B cell (primary cell): ENCODE measurements at regions of chr17 and their contacts with region 1.

Region 1: GRCh38 chr17:28902819-28903545 is at the start of gene DHRS13:
- DNase-seq: peak; percentile 98
- ATAC-seq: peak; percentile 90
- H3K4me3 ChIP-seq: peak within 1 kb of the TSS; percentile 68 to 90 (median 76)
- H3K4me3 Mint-ChIP-seq: peak within 1 kb of the TSS; percentile 88
- H3K27ac ChIP-seq: peak within 1 kb of the TSS; percentile 61 to 77
- H3K27ac Mint-ChIP-seq: peak within 1 kb of the TSS; percentile 88
- H3K4me1 ChIP-seq: peaks cover 18 to 32% of the 10 kb centered on the region in 2 donors
- H3K4me1 Mint-ChIP-seq: peaks cover 34% of the 10 kb centered on the region
- H3K27me3 ChIP-seq: no peaks in the 10 kb centered on the region
- H3K27me3 Mint-ChIP-seq: no peaks in the 10 kb centered on the region
- CTCF ChIP-seq: peak; percentile 100
- total RNA-seq, gene DHRS13: 27.1 and 28.1 TPM in 2 replicates

Region 2: DNA sequence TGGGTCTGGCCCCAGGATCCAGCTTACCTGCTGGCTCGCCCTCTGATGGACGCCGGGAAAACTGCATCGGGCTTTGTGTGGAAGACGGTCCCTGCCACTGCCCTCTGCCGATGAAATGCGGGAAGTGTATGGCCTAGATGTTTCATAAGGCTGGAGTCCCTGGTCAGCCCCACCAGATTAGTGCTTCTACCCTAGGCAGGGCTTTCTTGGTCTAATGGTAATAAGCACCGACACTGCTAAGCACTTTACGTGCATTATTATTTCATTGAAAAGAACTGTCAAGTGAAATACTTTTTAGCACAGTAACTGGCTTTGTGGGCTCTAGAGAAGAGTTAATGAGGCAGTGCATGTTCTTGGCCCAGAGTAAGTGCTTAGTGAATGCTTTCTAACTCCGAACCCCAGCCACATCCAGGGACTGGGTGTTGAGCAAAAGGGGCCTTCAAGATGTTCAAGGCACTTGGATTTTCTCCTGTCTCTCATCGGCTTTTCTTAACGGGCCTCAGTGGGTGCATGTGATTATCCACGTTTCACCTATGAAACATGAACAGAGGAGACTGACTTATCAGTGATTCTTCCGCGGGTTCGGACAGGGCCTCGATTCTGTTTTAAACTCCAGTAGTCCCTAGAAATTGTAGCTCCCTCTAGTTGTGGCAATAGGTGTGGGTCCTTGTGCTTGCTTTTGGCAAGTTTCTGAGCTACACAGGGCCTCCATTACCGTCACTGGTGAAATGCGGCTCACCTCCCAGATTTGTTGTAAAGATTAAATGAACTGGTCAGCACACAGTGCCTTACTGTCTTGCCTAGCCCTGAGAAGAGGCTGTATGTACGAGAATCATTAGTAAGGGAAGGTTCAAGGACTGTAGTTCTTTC is 152.6 kb before region 1 on chr17:
- CTCF ChIA-PET with region 1: interaction called, 16 read pairs
- POLR2A ChIA-PET with region 1: no interaction called
- intact Hi-C with region 1: no loop called
- DNase-seq: peak; percentile 93
- ATAC-seq: peak; percentile 97
- H3K4me3 ChIP-seq: no peak overlapping the region
- H3K4me3 Mint-ChIP-seq: no peak overlapping the region
- H3K27ac ChIP-seq: peak overlapping the region in 1 of 2 donors; percentile 41
- H3K27ac Mint-ChIP-seq: peak overlapping the region; percentile 67
- H3K4me1 ChIP-seq: peaks cover 32 to 34% of the 10 kb centered on the region in 2 donors
- H3K4me1 Mint-ChIP-seq: peaks cover 42% of the 10 kb centered on the region
- H3K27me3 ChIP-seq: no peaks in the 10 kb centered on the region
- H3K27me3 Mint-ChIP-seq: no peaks in the 10 kb centered on the region
- CTCF ChIP-seq: peak; percentile 100

Region 3: DNA sequence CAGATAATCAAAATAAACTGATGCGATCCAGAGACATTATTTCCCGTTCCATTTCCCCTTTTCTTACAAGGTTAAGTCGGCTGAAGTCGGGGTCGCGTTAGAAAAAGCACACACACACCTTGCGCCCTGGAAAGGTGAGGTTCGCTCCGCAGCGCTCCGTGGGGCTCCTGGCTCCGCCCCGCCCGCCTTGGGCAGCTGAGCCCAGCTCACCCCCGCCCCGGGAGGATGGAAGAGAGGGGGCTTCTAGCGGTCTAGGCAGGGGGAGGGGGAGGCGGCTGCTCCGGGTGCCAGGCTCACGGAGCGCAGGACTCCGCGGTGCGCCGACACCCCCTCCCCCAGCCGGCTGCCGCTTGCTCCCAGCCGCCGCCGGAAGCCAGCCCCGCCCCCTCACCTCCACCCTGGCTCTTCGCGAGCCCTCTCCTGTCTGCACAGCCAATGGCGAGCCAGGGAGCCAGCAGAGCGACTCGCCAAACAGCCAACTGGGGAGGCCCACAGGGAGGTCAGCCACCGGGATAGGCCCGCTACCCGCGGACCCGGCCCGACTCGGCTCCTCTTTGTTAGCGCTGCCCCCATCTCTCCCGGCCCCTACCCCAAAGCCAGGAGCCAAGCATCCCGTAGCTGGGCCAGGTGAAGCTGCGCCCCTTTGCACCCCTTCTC is 90.8 kb before region 1 on chr17:
- CTCF ChIA-PET with region 1: interaction called, 5 read pairs
- POLR2A ChIA-PET with region 1: no interaction called
- intact Hi-C with region 1: loop called (anchors 1 kb)
- DNase-seq: peak; percentile 95
- ATAC-seq: peak; percentile 99
- H3K4me3 ChIP-seq: peak overlapping the region; percentile 48 to 92 (median 77)
- H3K4me3 Mint-ChIP-seq: peak overlapping the region; percentile 92
- H3K27ac ChIP-seq: peak overlapping the region; percentile 87
- H3K27ac Mint-ChIP-seq: peak overlapping the region; percentile 92
- H3K4me1 ChIP-seq: peaks cover 12 to 16% of the 10 kb centered on the region in 2 donors
- H3K4me1 Mint-ChIP-seq: peaks cover 34% of the 10 kb centered on the region
- H3K27me3 ChIP-seq: no peaks in the 10 kb centered on the region
- H3K27me3 Mint-ChIP-seq: no peaks in the 10 kb centered on the region
- CTCF ChIP-seq: no peak

Region 4: DNA sequence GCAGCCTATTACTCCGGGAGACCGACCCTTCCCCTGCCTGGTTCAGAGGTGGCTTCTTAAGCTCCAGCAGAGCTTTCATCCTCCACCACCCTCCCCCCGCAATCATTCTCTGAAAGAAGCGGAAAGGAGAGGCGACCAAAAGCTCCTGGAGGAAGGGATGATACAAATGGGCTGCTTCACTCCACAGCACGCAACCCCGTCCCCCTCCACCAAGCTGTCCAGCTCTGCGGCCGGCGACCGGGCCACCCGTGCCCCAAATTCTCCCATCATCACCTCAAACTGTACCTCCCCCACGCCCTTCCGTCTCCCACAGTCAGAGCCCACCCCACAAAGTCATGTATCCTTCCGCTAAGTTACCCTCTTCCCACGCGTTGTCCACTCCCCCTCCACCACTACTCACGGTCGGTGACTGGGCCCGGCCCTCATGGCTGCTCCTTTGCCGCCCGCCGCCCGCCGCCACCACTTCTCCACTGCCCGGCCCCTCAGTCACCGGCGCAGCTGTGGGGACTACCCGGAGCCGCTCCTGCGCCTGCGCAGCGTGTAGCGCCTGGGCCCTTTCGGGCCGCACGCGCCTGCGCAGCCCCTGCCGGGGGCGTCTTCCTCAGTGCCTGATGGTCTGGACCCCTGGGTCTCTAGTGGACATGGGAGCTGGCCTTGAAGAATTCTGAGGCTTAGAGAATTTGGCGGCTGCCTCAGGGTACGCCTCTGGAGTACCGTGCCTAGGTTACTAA is 60.5 kb before region 1 on chr17 and contains the start of gene FAM222B:
- CTCF ChIA-PET with region 1: interaction called, 22 read pairs
- POLR2A ChIA-PET with region 1: interaction called, 5 read pairs
- intact Hi-C with region 1: loop called (anchors 1 kb)
- DNase-seq: peak; percentile 91
- ATAC-seq: peak; percentile 98
- H3K4me3 ChIP-seq: peak within 1 kb of the TSS; percentile 67 to 92 (median 87)
- H3K4me3 Mint-ChIP-seq: peak within 1 kb of the TSS; percentile 97
- H3K27ac ChIP-seq: peak within 1 kb of the TSS; percentile 70 to 87
- H3K27ac Mint-ChIP-seq: peak within 1 kb of the TSS; percentile 96
- H3K4me1 ChIP-seq: peaks cover 10 to 15% of the 10 kb centered on the region in 2 donors
- H3K4me1 Mint-ChIP-seq: peaks cover 23% of the 10 kb centered on the region
- H3K27me3 ChIP-seq: no peaks in the 10 kb centered on the region
- H3K27me3 Mint-ChIP-seq: no peaks in the 10 kb centered on the region
- CTCF ChIP-seq: no peak
- total RNA-seq, gene FAM222B: 21.9 and 23.1 TPM in 2 replicates

Region 5: DNA sequence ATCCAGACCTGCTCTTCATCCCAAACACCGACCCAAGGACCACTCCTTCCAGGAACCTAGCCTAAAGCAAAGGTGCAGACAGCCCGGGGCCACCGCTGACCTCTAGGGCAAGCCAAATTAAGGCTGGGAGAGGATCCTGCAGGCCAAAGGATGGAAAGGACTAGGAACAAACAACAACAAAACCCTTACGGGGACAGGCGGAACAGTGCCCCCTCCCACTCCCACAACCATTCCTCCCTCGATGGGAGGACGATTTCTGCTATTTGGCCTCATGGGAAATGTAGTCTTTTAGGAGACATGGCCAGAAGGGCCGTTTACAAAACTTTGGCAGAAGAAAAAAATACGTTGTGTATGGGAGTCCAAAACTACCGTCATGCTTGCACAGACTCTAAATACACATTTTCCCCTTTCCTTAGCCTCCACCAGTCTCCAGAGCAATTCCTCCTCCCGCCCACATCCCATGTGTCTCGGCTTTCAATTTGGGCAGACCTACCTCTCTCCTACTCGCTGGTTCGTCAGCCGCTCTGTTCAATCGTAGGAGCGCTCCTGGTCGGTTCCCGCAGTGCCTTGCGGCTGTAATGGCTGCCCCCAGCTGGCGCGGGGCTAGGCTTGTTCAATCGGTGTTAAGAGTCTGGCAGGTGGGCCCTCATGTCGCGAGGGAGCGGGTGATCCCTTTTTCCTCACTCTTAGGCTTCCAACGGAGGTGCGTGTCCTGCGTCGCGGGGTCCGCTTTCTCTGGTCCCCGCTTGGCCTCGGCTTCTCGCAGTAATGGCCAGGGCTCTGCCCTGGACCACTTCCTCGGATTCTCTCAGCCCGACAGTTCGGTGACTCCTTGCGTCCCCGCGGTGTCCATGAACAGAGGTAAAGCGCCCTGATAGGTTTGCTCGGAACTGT is 48.3 kb before region 1 on chr17 and contains the start of gene ERAL1:
- CTCF ChIA-PET with region 1: interaction called, 7 read pairs
- POLR2A ChIA-PET with region 1: interaction called, 6 read pairs
- intact Hi-C with region 1: loop called (anchors 1 kb)
- DNase-seq: peak; percentile 88
- ATAC-seq: peak; percentile 99
- H3K4me3 ChIP-seq: peak within 1 kb of the TSS; percentile 61 to 93 (median 82)
- H3K4me3 Mint-ChIP-seq: peak within 1 kb of the TSS; percentile 96
- H3K27ac ChIP-seq: peak within 1 kb of the TSS; percentile 59 to 75
- H3K27ac Mint-ChIP-seq: peak within 1 kb of the TSS; percentile 90
- H3K4me1 ChIP-seq: peaks cover 10 to 16% of the 10 kb centered on the region in 2 donors
- H3K4me1 Mint-ChIP-seq: peaks cover 17% of the 10 kb centered on the region
- H3K27me3 ChIP-seq: no peaks in the 10 kb centered on the region
- H3K27me3 Mint-ChIP-seq: no peaks in the 10 kb centered on the region
- CTCF ChIP-seq: no peak
- total RNA-seq, gene ERAL1: 35.9 and 39.5 TPM in 2 replicates

Region 6: DNA sequence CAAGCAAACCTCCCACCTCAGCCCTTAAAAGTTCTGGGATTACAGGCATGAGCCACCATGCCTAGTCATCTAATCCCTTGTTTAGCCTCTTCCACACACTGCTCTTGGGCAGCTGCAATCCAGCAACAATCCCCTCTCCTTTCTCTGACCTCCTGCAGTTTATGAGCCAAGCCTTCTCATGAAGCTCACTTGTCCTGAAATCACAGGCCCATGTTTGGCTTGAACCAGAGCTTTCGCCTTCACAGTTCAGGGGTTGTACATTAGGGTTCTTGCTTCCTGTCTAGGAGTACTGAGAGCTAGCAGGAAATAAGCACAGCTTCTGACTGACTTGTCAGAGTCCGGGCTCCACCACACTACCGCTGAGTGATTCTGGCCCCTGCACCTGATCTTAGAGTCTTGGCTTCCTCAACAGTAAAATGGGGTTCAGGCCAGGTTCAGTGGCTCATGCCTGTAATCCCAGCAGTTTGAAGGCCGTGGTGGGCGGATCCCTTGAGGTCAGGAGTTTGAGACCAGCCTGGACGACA is 31.9 kb before region 1 on chr17:
- CTCF ChIA-PET with region 1: interaction called, 16 read pairs
- POLR2A ChIA-PET with region 1: interaction called, 3 read pairs
- intact Hi-C with region 1: loop called (anchors 5 kb)
- DNase-seq: peak; percentile 68
- ATAC-seq: peak; percentile 99
- H3K4me3 ChIP-seq: no peak overlapping the region
- H3K4me3 Mint-ChIP-seq: peak overlapping the region; percentile 68
- H3K27ac ChIP-seq: peak overlapping the region; percentile 65 to 90
- H3K27ac Mint-ChIP-seq: peak overlapping the region; percentile 97
- H3K4me1 ChIP-seq: peaks cover 13 to 23% of the 10 kb centered on the region in 2 donors
- H3K4me1 Mint-ChIP-seq: peaks cover 23% of the 10 kb centered on the region
- H3K27me3 ChIP-seq: no peaks in the 10 kb centered on the region
- H3K27me3 Mint-ChIP-seq: no peaks in the 10 kb centered on the region
- CTCF ChIP-seq: no peak

Region 7: GRCh38 chr17:28889996-28890395 is 13.0 kb before region 1 on chr17:
- CTCF ChIA-PET with region 1: interaction called, 17 read pairs
- POLR2A ChIA-PET with region 1: interaction called, 7 read pairs
- intact Hi-C with region 1: loop called (anchors 2 kb)
- DNase-seq: no peak
- ATAC-seq: no peak
- H3K4me3 ChIP-seq: no peak overlapping the region
- H3K4me3 Mint-ChIP-seq: peak overlapping the region; percentile 45
- H3K27ac ChIP-seq: no peak overlapping the region
- H3K27ac Mint-ChIP-seq: peak overlapping the region; percentile 75
- H3K4me1 ChIP-seq: peaks cover 54 to 71% of the 10 kb centered on the region in 2 donors
- H3K4me1 Mint-ChIP-seq: peaks cover 75% of the 10 kb centered on the region
- H3K27me3 ChIP-seq: no peaks in the 10 kb centered on the region
- H3K27me3 Mint-ChIP-seq: no peaks in the 10 kb centered on the region
- CTCF ChIP-seq: no peak

Region 8: DNA sequence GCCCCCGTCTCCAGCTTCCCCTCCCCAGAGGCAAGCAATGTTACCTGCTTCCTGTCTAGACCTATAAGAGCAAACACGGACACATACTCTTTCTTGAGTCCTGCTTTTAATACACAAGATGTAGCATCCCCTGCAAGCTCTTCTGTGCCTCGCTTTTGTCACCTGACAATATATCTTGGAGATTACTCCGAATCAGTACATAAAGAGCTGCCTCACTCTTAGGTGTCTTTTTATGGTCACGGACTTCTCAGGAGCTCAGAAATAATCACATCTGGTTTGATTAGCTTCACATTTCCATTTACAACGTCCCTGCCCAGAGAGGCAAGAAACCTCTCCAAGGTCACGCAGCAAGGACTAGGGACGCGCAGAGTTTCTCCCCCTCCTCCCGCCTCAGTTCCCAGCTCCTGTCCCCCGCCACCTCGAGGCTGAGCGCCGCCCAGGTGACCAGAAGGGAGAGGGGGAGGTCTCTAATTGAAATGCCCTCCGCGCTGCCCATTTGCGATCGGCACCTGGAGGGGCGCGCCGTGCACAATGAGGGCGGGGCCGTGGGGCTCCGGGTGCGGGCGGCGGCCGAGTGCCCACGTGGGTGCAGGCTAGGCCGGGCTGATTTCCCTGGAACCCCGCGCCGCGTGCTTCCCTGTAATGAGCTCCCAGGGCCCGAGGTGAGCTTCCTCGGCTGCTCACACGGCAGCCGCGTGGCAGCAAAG is 116.6 kb after region 1 on chr17:
- CTCF ChIA-PET with region 1: no interaction called
- POLR2A ChIA-PET with region 1: no interaction called
- intact Hi-C with region 1: no loop called
- DNase-seq: peak; percentile 19
- ATAC-seq: no peak
- H3K4me3 ChIP-seq: peak overlapping the region in 2 of 5 experiments; percentile 8 to 15
- H3K4me3 Mint-ChIP-seq: peak overlapping the region; percentile 56
- H3K27ac ChIP-seq: no peak overlapping the region
- H3K27ac Mint-ChIP-seq: no peak overlapping the region
- H3K4me1 ChIP-seq: peaks cover 14 to 15% of the 10 kb centered on the region in 2 donors
- H3K4me1 Mint-ChIP-seq: peaks cover 9% of the 10 kb centered on the region
- H3K27me3 ChIP-seq: peaks cover 0 to 65% (median 19%) of the 10 kb centered on the region in 4 experiments
- H3K27me3 Mint-ChIP-seq: peaks cover 74% of the 10 kb centered on the region
- CTCF ChIP-seq: no peak